Colonic mucosa (tissue), 4 donors: ENCODE measurements at regions of chr9 and their contacts with region 1.

Region 1: DNA sequence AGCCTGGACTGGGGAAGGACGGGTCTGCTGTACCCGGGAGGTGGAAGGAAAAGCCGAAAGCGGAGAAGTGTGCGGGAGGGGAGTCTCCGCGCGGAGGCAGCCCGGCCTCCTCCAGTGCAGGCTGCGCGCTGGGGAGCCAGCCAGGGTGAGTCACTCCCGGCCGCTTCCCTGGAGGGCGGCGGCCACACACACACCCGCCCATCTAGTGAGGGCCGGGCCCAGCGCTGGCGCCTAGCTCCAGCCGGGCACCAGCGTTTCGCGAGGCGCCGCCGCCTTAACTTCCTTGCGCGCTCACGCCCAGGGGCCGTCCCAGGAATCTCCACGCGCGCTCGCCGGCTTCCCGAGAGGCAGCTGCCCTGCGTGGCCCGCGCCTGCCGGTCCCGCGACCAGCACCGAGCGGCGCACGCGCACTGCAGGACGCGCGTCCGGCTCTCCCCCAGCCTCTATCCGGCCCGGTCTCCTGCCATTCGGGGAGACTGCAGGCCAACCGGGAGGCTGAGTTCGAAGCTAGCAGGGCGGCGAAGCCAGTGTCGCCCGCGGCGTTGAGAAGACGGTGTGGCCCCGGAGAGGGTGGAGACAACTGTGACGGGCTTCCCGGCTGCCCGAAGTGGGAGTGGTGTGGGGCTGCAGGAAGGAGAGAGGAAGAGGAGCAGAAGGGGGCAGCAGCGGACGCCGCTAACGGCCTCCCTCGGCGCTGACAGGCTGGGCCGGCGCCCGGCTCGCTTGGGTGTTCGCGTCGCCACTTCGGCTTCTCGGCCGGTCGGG is at the start of gene JAK2:
- DNase-seq: peak; percentile 92
- H3K4me3 ChIP-seq: peak within 1 kb of the TSS; percentile 68
- H3K27ac ChIP-seq: peak within 1 kb of the TSS; percentile 99
- H3K4me1 ChIP-seq: no peaks in the 10 kb centered on the region
- H3K27me3 ChIP-seq: no peaks in the 10 kb centered on the region
- CTCF ChIP-seq: peak; percentile 21
- total RNA-seq, gene JAK2: 7.0 to 14.8 TPM

Region 2: GRCh38 chr9:4679268-4680172 is 305.3 kb before region 1 on chr9 and contains the start of gene CDC37L1:
- intact Hi-C with region 1: loop called (anchors 10 kb)
- DNase-seq: peak; percentile 99
- H3K4me3 ChIP-seq: peak within 1 kb of the TSS; percentile 67
- H3K27ac ChIP-seq: peak within 1 kb of the TSS; percentile 93
- H3K4me1 ChIP-seq: peaks cover 3% of the 10 kb centered on the region
- H3K27me3 ChIP-seq: no peaks in the 10 kb centered on the region
- CTCF ChIP-seq: peak; percentile 57
- total RNA-seq, gene CDC37L1: 11.4 to 16.1 TPM

Region 3: DNA sequence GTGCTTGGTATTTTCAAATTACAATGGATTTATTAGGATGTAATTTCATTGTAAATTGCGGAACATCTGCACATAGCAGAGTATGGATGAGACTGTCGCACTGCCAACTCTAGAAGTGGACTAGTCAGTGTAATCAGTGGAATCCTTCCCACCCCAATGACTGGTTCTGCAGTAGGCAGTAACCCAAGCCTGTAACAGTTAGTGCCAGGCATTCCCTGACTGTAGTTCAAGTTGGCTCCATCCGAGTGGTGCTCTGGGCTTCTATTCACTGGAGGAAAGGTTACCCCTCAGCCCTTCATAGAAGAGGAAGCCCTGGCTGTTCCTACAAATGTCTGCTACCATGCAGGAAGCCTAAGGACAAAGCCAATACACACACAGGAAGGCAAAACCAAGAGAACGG is 267.0 kb before region 1 on chr9:
- intact Hi-C with region 1: no loop called
- DNase-seq: no peak
- H3K4me3 ChIP-seq: no peak overlapping the region
- H3K27ac ChIP-seq: no peak overlapping the region
- H3K4me1 ChIP-seq: no peaks in the 10 kb centered on the region
- H3K27me3 ChIP-seq: no peaks in the 10 kb centered on the region
- CTCF ChIP-seq: no peak

Region 4: GRCh38 chr9:4762108-4762885 is 222.5 kb before region 1 on chr9:
- intact Hi-C with region 1: loop called (anchors 5 kb)
- DNase-seq: peak; percentile 91
- H3K4me3 ChIP-seq: peak overlapping the region; percentile 17
- H3K27ac ChIP-seq: peak overlapping the region; percentile 48
- H3K4me1 ChIP-seq: no peaks in the 10 kb centered on the region
- H3K27me3 ChIP-seq: no peaks in the 10 kb centered on the region
- CTCF ChIP-seq: peak; percentile 77

Region 5: DNA sequence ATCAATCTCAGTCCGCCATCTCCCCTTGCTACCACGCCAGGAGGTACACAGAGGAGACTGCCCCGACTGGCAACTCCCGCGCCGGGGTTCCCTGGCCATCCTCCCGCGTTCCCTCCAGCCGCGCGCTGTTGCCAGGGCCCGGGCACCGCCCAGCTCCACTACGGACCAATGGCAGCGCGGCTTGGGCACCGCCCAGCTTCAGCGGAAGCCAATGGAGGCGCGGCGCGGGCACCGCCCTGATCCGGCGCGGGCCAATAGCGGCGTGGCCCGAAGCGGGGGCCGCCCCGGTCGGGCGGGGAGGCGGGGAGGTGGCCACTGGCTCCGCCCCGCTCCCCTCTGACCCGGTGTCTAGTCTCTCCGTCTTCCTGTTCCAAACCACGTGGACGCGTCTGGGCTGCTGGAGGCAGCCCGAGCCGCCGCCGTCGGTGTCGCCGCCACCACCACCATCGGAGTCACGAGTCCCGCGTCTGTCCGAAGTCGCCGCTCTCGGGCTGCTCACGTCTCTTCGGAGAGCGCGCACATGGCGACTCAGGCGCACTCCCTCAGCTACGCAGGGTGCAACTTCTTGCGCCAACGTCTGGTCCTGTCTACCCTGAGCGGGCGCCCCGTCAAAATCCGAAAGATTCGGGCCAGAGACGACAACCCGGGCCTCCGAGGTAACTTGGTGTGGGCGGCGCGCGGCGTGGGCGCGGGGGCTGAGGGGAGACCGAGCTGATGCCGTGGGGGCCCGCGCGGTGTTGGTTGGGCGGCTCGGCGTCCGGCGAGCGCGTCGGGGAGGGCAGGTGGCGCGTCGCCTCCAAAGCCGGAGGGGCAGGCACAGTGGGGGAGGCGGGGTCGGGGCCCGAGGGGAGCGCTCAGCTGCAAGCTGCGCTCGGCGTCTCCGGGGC is 192.0 kb before region 1 on chr9 and contains the start of gene RCL1:
- intact Hi-C with region 1: loop called (anchors 10 kb)
- DNase-seq: peak; percentile 96
- H3K4me3 ChIP-seq: peak within 1 kb of the TSS; percentile 90
- H3K27ac ChIP-seq: peak within 1 kb of the TSS; percentile 74
- H3K4me1 ChIP-seq: no peaks in the 10 kb centered on the region
- H3K27me3 ChIP-seq: no peaks in the 10 kb centered on the region
- CTCF ChIP-seq: no peak
- total RNA-seq, gene RCL1: 7.0 to 12.5 TPM

Region 6: DNA sequence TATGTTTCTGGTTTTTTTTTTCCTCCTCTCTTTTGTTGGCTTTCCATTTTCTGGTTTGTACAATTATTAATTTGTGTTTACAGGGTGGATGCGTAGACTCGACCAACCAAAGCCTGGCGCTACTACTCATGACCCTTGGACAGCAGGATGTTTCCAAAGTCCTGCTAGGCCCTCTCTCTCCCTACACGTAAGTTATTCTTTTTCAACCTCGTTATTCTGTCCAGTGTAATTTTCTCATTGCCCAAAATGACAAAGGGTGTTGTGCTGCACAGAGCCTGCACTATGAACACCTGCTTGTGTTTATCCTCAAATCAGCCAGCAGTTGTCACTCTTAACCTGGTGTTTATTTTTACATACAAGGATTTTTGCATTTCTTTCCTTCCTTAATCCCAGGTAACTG is 135.4 kb before region 1 on chr9:
- intact Hi-C with region 1: loop called (anchors 5 kb)
- DNase-seq: no peak
- H3K4me3 ChIP-seq: no peak overlapping the region
- H3K27ac ChIP-seq: no peak overlapping the region
- H3K4me1 ChIP-seq: no peaks in the 10 kb centered on the region
- H3K27me3 ChIP-seq: no peaks in the 10 kb centered on the region
- CTCF ChIP-seq: peak; percentile 22

Region 7: DNA sequence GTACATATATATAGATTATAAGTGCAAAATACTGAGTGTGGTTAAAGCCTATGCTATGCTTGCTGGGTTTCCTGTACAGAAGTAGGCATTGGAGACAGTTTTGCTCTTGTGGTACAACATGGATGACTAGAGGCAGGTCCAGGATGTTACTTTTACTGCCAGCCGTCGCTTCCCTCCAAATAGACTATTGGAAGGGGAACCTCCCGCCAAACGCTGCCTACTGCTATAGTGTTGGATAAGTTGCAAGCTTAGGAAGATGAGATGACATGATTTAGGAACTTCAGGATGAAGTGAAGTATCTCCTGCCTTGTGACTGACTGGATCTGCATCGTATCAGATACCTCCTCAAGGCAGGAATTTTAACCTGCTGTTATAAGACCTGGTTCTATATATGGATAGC is 31.1 kb after region 1 on chr9:
- intact Hi-C with region 1: no loop called
- DNase-seq: no peak
- H3K4me3 ChIP-seq: no peak overlapping the region
- H3K27ac ChIP-seq: no peak overlapping the region
- H3K4me1 ChIP-seq: no peaks in the 10 kb centered on the region
- H3K27me3 ChIP-seq: no peaks in the 10 kb centered on the region
- CTCF ChIP-seq: no peak

Region 8: GRCh38 chr9:5425006-5425628 is 440.3 kb after region 1 on chr9:
- intact Hi-C with region 1: loop called (anchors 10 kb)
- DNase-seq: no peak
- H3K4me3 ChIP-seq: no peak overlapping the region
- H3K27ac ChIP-seq: no peak overlapping the region
- H3K4me1 ChIP-seq: no peaks in the 10 kb centered on the region
- H3K27me3 ChIP-seq: no peaks in the 10 kb centered on the region
- CTCF ChIP-seq: peak; percentile 38